Activated CD4-positive, alpha-beta T cell treated with anti-CD3 and anti-CD28 coated beads for 36 hours (primary cell): ENCODE measurements at regions of chr4 and their contacts with region 1.

Region 1: GRCh38 chr4:80215449-80216052 is 18.2 kb downstream of the PRDM8 start:
- DNase-seq: no peak
- ATAC-seq: no peak
- H3K4me3 Mint-ChIP-seq: no peak overlapping the region
- H3K27ac Mint-ChIP-seq: no peak overlapping the region
- H3K4me1 Mint-ChIP-seq: peaks cover 2% of the 10 kb centered on the region
- H3K27me3 Mint-ChIP-seq: peaks cover 17% of the 10 kb centered on the region

Region 2: DNA sequence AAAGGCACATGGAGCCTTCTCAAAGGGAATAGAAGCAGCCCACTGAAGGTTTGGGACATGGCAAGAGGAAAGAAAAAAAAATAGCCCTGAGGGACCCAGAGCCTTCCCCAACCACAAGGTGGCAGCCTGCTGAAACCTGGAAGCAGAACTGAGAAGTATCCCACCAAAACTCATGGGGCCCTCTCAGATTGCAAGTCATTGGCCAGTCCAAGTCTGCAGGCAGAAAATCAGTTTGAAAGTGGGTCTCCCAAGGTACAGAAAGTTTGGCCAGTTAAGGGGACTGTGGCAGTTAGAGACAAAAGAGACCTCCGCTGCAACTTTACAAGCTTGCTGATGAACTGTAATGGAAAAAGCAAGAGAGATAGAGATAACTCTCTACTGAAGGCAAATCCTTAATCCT is 298.3 kb before region 1 on chr4:
- CTCF ChIA-PET with region 1: interaction called, 8 read pairs
- POLR2A ChIA-PET with region 1: no interaction called
- intact Hi-C with region 1: loop called (anchors 1 kb)
- DNase-seq: peak; percentile 67
- ATAC-seq: peak; percentile 60
- H3K4me3 Mint-ChIP-seq: no peak overlapping the region
- H3K27ac Mint-ChIP-seq: peak overlapping the region; percentile 58
- H3K4me1 Mint-ChIP-seq: peaks cover 19% of the 10 kb centered on the region
- H3K27me3 Mint-ChIP-seq: no peaks in the 10 kb centered on the region